Sigmoid colon (tissue), 7 donors: ENCODE measurements at regions of chr1 and their contacts with region 1.

Region 1: GRCh38 chr1:162689745-162690671 is 57.7 kb downstream of the DDR2 start:
- DNase-seq: no peak
- H3K4me3 ChIP-seq: no peak overlapping the region
- H3K27ac ChIP-seq: peak overlapping the region; percentile 78 to 90 (median 88)
- H3K4me1 ChIP-seq: peaks cover 3 to 98% (median 91%) of the 10 kb centered on the region in 4 donors
- H3K27me3 ChIP-seq: no peaks in the 10 kb centered on the region
- CTCF ChIP-seq: no peak
- EP300 ChIP-seq: no peak
- POLR2A ChIP-seq: no peak

Region 2: DNA sequence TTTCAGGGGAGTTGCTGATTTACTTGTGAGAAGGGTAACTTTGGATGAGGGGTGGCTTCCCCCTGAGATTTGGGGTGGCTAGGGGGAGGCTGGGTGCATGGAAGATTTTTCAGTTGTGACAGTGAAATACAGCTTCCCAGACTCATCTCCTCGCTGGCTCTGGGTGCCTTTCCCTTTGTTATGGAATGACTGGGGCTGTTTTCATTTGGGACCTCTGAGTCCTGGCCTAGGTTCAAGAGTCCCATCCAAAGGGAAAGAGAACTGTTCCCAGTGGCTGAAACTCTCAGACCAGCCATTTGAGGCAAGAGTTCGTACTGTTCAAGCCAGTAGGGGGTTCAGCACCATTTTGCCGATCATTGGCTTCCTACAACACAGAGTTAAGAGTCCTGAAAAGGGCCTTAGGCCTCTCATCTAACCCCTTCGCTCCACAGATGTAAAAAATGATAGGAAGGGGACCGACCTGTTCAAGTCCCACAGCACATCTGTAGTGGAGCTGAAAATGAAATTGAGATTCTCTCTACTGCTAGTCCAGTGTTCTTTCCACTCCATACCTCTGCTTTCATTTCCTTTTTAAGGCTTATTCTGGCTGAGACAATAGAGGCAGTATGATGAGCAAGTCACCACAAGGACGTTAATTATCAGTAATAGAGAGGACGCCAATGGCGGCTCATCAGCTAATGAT is 56.8 kb before region 1 on chr1:
- intact Hi-C with region 1: loop called (anchors 5 kb)
- DNase-seq: peak; percentile 77
- H3K4me3 ChIP-seq: peak overlapping the region; percentile 37 to 56 (median 56)
- H3K27ac ChIP-seq: peak overlapping the region; percentile 90 to 94 (median 90)
- H3K4me1 ChIP-seq: peaks cover 0 to 72% (median 58%) of the 10 kb centered on the region in 4 donors
- H3K27me3 ChIP-seq: no peaks in the 10 kb centered on the region
- CTCF ChIP-seq: no peak
- EP300 ChIP-seq: no peak
- POLR2A ChIP-seq: peak; percentile 21 to 30